ENCODE measurements at regions of chr2 and their contacts with region 1.

Region 1: DNA sequence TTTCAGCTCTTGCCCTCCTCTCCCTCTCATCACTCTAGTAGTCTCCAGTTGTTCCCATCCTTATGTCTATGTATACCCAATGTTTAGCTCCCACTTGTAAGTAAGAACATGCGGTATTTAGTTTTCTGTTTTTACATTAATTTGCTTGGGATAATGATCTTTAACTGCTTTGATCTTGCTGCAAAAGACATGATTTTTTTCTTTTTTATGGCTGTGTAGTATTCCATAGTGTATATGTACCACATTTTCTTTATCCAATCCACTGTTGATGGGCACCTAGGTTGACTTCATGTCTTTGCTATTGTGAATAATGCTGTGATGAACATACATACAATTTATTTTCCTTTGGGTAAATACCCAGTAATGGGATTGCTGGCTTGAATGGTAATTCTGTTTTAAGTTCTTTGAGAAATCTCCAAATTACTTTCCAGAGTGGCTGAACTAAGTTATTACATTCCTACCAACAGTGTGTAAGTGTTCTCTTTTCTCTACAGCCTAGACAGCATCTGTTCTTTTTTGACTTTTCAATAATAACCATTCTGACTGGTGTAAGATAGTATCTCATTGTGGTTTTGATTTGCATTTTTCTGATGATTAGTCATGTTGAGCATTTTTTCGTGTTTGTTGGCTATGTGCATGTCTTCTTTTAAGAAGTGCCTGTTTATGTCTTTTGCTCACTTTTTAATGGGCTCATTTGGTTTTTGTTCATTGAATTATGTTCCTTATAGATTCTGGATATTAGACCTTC is 179.6 kb upstream of the SLC39A10 start:
- DNase-seq: no peak
- H3K4me3 Mint-ChIP-seq: no peak overlapping the region
- H3K27ac Mint-ChIP-seq: peak overlapping the region; percentile 42
- H3K4me1 Mint-ChIP-seq: peaks cover 22% of the 10 kb centered on the region
- H3K27me3 Mint-ChIP-seq: no peaks in the 10 kb centered on the region

Region 2: DNA sequence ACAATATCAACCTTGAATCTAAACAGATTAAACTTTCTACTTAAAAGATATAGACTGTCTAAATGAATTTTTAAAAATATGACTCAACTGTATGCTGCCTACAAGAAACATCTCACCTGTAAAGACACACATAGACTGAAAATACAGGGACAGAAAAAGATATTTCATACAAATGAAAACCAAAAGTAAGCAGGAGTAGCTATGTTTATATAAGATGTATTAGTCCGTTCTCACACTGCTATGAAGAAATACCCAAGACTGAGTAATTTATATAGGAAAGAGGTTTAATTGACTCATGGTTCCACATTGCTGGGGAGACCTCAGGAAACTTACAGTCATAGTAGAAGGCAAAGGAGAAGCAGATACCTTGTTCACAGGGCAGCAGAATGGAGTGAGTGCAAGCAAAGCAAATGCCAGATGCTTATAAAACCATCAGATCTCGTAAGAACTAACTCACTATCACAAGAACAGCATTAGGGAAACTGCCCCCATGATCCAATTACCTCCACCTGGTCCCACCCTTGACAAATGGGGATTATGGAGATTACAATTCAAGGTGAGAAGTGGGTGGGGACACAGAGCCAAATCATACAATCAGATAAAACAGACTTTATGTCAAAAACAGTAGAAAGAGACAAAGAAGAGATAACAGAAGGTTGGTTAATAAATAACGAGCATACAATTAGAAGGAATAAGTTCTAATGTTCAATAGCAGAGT is 34.8 kb before region 1 on chr2:
- CTCF ChIA-PET with region 1: no interaction called
- intact Hi-C with region 1: loop called (anchors 2 kb)
- DNase-seq: peak; percentile 19
- H3K4me3 Mint-ChIP-seq: no peak overlapping the region
- H3K27ac Mint-ChIP-seq: peak overlapping the region; percentile 18
- H3K4me1 Mint-ChIP-seq: peaks cover 8% of the 10 kb centered on the region
- H3K27me3 Mint-ChIP-seq: no peaks in the 10 kb centered on the region

Measured in activated naive CD4-positive, alpha-beta T cell treated with anti-CD3 and anti-CD28 coated beads for 36 hours (primary cell).